ENCODE measurements at regions of chr12 and their contacts with region 1.

Region 1: DNA sequence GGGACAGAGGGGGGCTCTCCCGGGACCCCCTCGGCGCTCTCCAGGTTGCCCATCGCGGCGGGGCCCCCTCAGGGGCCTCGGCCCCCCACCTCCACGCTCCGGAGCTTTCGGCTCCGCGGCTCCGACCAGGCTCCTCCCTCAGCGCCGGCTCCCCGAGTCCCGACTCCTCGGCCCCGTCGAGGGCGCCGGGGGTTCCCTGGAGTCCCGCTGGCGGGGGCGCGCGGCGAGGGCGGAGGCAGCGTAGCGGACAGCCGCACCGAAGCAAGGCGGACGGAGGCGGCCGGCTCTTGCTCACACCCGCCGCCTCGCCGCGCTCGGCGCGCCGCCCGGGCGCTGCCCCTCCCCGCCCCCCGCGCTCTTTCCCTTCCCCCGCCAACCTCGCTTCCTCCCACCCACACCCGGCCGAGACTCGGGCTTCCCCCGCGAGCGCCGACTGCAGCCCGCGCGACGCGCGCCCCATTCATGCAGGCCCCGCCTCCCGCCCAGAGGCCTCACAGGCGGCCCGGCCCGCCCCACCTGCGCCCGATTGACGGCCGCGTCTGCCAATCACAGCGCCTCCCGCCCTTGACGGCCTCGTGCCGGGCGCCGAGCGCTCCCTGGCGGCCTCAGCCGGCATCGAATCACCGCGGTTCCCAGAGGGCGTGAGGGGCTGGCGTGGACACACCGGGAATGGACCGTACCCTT is at the start of gene FMNL3:
- DNase-seq: peak; percentile 98
- ATAC-seq: peak; percentile 91
- H3K4me3 Mint-ChIP-seq: peak within 1 kb of the TSS; percentile 86
- H3K27ac Mint-ChIP-seq: peak within 1 kb of the TSS; percentile 86
- H3K4me1 Mint-ChIP-seq: peaks cover 43% of the 10 kb centered on the region
- H3K27me3 Mint-ChIP-seq: peaks cover 12% of the 10 kb centered on the region
- CTCF ChIP-seq: peak; percentile 97
- total RNA-seq, gene FMNL3: 22.8 to 23.5 TPM

Region 2: GRCh38 chr12:49623142-49623904 is 83.9 kb before region 1 on chr12 and contains the start of gene PRPF40B:
- CTCF ChIA-PET with region 1: interaction called, 23 read pairs
- POLR2A ChIA-PET with region 1: interaction called, 5 read pairs
- intact Hi-C with region 1: no loop called
- DNase-seq: peak; percentile 93
- ATAC-seq: peak; percentile 82
- H3K4me3 Mint-ChIP-seq: peak within 1 kb of the TSS; percentile 76
- H3K27ac Mint-ChIP-seq: peak within 1 kb of the TSS; percentile 79
- H3K4me1 Mint-ChIP-seq: peaks cover 26% of the 10 kb centered on the region
- H3K27me3 Mint-ChIP-seq: peaks cover 22% of the 10 kb centered on the region
- CTCF ChIP-seq: peak; percentile 55
- total RNA-seq, gene PRPF40B: 4.9 to 5.6 TPM

Region 3: GRCh38 chr12:49644620-49644994 is 62.7 kb before region 1 on chr12:
- CTCF ChIA-PET with region 1: interaction called, 556 read pairs
- POLR2A ChIA-PET with region 1: interaction called, 6 read pairs
- intact Hi-C with region 1: loop called (anchors 2 kb)
- DNase-seq: peak; percentile 88
- ATAC-seq: peak; percentile 96
- H3K4me3 Mint-ChIP-seq: no peak overlapping the region
- H3K27ac Mint-ChIP-seq: peak overlapping the region; percentile 77
- H3K4me1 Mint-ChIP-seq: peaks cover 15% of the 10 kb centered on the region
- H3K27me3 Mint-ChIP-seq: no peaks in the 10 kb centered on the region
- CTCF ChIP-seq: peak; percentile 92

Region 4: DNA sequence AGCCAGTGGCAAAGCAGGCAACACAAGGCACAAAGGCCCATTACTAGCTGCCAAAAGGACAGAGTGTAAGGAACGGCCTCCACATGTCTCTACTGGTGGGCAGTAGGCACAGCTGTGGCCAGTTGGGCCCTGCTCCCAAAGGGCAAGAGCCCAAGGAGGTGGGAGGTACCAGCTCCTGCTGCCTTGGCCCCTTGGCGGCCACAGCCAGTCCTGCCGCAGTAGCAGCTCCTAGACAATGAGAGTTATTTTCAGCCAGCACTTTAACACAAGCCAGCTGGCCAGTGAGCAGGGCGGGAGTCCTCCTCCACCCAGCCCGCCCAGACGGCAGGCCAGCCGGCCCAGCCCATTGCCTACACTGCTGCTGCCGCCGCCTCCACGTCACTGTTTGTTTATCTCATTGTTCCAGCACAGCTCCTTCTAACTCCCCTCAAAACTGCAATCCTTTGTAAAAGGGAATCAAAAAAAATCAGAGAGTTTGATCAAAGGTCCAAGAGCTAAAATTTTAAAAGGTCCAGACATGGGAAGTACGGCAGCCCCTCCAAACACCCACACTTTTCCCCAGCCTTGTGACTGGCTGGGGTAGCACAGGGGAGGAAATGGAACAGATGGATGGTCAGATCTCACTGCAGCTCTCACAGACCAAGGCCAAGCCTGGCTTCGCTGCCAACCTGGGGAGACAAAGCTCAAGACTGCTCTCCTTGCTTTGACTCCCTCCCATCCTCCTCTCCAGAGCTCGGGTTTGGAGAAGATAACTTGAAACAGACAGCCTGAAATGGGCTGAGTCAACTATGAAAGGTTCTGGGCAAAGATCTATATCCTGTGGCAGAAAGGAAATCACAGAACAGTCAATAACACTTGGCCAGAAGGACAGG is 33.6 kb before region 1 on chr12:
- CTCF ChIA-PET with region 1: interaction called, 80 read pairs
- POLR2A ChIA-PET with region 1: interaction called, 11 read pairs
- intact Hi-C with region 1: no loop called
- DNase-seq: no peak
- ATAC-seq: peak; percentile 32
- H3K4me3 Mint-ChIP-seq: peak overlapping the region; percentile 16
- H3K27ac Mint-ChIP-seq: peak overlapping the region; percentile 97
- H3K4me1 Mint-ChIP-seq: peaks cover 81% of the 10 kb centered on the region
- H3K27me3 Mint-ChIP-seq: no peaks in the 10 kb centered on the region
- CTCF ChIP-seq: no peak

Region 5: DNA sequence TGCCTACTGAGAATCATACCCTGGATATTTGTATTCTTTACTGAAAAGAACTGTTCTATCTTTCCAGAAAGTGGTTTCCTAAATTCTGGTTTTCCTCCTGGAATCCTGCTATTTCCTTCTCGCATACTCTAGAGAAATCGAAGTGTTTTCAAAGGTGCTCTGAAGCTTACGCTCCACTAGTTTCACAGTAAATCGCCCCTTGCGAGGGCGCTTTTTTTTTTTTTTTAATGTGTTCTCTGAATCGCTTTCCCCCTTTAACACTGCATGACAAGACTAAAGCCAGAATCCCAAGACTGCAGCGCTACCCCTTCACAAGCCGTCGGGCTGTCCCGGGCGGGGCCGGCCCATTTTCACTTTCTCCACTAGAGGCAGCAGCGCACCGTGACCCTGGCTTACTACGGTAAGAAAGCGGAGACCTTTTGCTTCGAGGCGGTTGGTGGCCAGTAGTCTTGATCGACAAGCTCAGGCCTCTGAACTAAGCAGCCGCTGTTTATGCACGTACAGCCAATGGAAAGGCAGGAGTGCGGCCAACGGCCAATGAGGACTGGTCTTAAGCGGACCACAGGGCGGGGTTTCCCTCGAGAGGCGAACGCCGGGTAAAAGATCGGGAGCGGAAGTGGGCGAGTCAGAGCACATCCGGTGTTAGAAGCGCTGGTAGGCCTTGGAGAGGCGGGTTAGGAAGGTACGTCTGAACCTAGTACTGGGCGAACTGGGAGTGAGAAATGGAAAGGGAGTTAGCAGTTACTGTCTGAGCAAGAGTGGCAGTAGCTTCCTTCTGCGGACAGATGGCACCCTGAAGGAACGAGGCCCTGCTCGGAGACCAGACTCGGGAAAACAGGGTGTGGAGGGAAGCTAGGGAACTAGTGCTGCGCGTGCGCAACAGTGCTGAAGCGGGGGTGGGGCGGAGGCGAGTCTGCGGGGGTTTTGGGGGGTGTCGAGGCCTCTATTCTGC is 33.9 kb after region 1 on chr12 and contains the start of gene TMBIM6:
- CTCF ChIA-PET with region 1: interaction called, 23 read pairs
- POLR2A ChIA-PET with region 1: interaction called, 9 read pairs
- intact Hi-C with region 1: no loop called
- DNase-seq: peak; percentile 100
- ATAC-seq: peak; percentile 91
- H3K4me3 Mint-ChIP-seq: peak within 1 kb of the TSS; percentile 99
- H3K27ac Mint-ChIP-seq: peak within 1 kb of the TSS; percentile 95
- H3K4me1 Mint-ChIP-seq: peaks cover 31% of the 10 kb centered on the region
- H3K27me3 Mint-ChIP-seq: no peaks in the 10 kb centered on the region
- CTCF ChIP-seq: peak; percentile 95
- total RNA-seq, gene TMBIM6: 437 to 443 TPM

Region 6: GRCh38 chr12:49800421-49801140 is 93.3 kb after region 1 on chr12:
- CTCF ChIA-PET with region 1: no interaction called
- POLR2A ChIA-PET with region 1: no interaction called
- intact Hi-C with region 1: no loop called
- DNase-seq: no peak
- ATAC-seq: no peak
- H3K4me3 Mint-ChIP-seq: no peak overlapping the region
- H3K27ac Mint-ChIP-seq: no peak overlapping the region
- H3K4me1 Mint-ChIP-seq: no peaks in the 10 kb centered on the region
- H3K27me3 Mint-ChIP-seq: no peaks in the 10 kb centered on the region
- CTCF ChIP-seq: no peak

Region 7: GRCh38 chr12:50257686-50258551 is 550.6 kb after region 1 on chr12:
- CTCF ChIA-PET with region 1: no interaction called
- POLR2A ChIA-PET with region 1: no interaction called
- intact Hi-C with region 1: no loop called
- DNase-seq: no peak
- ATAC-seq: no peak
- H3K4me3 Mint-ChIP-seq: no peak overlapping the region
- H3K27ac Mint-ChIP-seq: no peak overlapping the region
- H3K4me1 Mint-ChIP-seq: peaks cover 16% of the 10 kb centered on the region
- H3K27me3 Mint-ChIP-seq: no peaks in the 10 kb centered on the region
- CTCF ChIP-seq: no peak